ENCODE measurements at regions of chr2 and their contacts with region 1.

Region 1: DNA sequence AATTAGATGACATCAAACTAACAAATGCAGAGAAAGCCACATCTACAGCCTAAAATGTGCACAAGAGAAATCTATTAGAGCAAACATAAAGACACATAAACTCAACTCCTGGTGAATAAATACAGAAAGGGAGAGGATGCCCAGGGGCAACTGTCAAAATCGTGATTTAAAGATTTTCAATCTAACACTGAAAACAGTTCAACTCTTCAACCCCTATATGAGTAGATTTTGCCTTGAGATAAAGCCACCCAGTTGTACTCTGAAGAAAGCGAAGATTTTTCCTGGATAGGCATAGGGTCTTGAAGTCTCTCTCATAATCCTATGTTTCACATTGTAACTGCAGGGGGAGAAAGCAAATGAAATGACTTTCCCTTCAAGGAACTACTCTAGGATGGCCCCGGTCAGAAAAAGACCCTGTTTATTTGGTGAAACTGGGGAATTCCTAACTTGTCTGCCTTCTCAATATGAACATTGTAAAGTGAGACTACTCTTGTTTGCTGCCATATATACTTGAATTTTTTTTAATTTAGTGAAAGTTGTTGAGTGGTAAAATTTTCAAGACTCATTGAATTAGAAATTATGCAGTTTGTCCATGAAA is 226.7 kb downstream of the ERBB4 start:
- DNase-seq: no peak
- ATAC-seq: no peak
- H3K4me3 ChIP-seq: no peak overlapping the region
- H3K27ac ChIP-seq: no peak overlapping the region
- H3K4me1 ChIP-seq: no peaks in the 10 kb centered on the region
- H3K27me3 ChIP-seq: peaks cover 4% of the 10 kb centered on the region; the same call in 1 of the 2 replicates
- CTCF ChIP-seq: no peak

Region 2: GRCh38 chr2:212135739-212136138 is 176.2 kb before region 1 on chr2:
- CTCF ChIA-PET with region 1: no interaction called
- POLR2A ChIA-PET with region 1: no interaction called
- intact Hi-C with region 1: no loop called
- DNase-seq: no peak
- ATAC-seq: peak; percentile 35; the same call in 1 of the 2 replicates
- H3K4me3 ChIP-seq: no peak overlapping the region
- H3K27ac ChIP-seq: no peak overlapping the region
- H3K4me1 ChIP-seq: no peaks in the 10 kb centered on the region
- H3K27me3 ChIP-seq: no peaks in the 10 kb centered on the region
- CTCF ChIP-seq: no peak

Region 3: GRCh38 chr2:212213191-212213590 is 98.7 kb before region 1 on chr2:
- CTCF ChIA-PET with region 1: no interaction called
- POLR2A ChIA-PET with region 1: interaction called, 10 read pairs
- intact Hi-C with region 1: no loop called
- DNase-seq: no peak
- ATAC-seq: no peak
- H3K4me3 ChIP-seq: no peak overlapping the region
- H3K27ac ChIP-seq: no peak overlapping the region
- H3K4me1 ChIP-seq: no peaks in the 10 kb centered on the region
- H3K27me3 ChIP-seq: no peaks in the 10 kb centered on the region
- CTCF ChIP-seq: no peak

Region 4: DNA sequence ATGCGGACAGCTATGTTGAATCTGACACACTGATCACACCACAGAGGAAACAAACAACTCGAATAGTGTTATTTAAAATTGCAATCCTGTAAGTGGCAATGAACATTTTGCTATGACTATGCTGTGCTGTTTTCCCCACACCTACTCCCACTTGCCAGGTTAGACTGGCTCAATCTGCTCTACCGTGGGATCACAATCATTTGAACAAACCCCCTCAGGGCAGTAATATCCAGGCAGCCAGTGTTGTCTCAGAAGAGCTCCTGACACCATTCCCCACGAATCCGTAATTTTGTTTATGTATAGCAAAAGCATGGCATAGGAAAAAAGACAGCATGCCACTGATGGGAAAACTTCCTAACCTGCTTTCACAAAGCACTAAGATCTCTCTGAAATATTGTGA is 57.6 kb before region 1 on chr2:
- CTCF ChIA-PET with region 1: no interaction called
- POLR2A ChIA-PET with region 1: no interaction called
- intact Hi-C with region 1: no loop called
- DNase-seq: no peak
- ATAC-seq: no peak
- H3K4me3 ChIP-seq: no peak overlapping the region
- H3K27ac ChIP-seq: no peak overlapping the region
- H3K4me1 ChIP-seq: no peaks in the 10 kb centered on the region
- H3K27me3 ChIP-seq: no peaks in the 10 kb centered on the region; the same call in 1 of the 2 replicates
- CTCF ChIP-seq: no peak

Measured in PC-3 (cell line).